Naive thymus-derived CD4-positive, alpha-beta T cell (primary cell): ENCODE measurements at regions of chr4 and their contacts with region 1.

Region 1: GRCh38 chr4:82268050-82268825 is 105.6 kb downstream of the HNRNPD start:
- DNase-seq: peak in 7 of 9 donors; percentile 25 to 60 (median 50)
- ATAC-seq: peak; percentile 97
- H3K4me3 ChIP-seq: no peak overlapping the region
- H3K4me3 Mint-ChIP-seq: peak overlapping the region in 8 of 10 donors; percentile 25 to 54 (median 36)
- H3K27ac ChIP-seq: no peak overlapping the region
- H3K27ac Mint-ChIP-seq: peak overlapping the region in 3 of 9 donors; percentile 25 to 79 (median 56)
- H3K4me1 ChIP-seq: peaks cover 0 to 8% of the 10 kb centered on the region in 2 donors
- H3K4me1 Mint-ChIP-seq: peaks cover 11 to 47% (median 28%) of the 10 kb centered on the region in 7 donors
- H3K27me3 ChIP-seq: no peaks in the 10 kb centered on the region
- H3K27me3 Mint-ChIP-seq: peaks cover 0 to 16% (median 0%) of the 10 kb centered on the region in 5 donors

Region 2: DNA sequence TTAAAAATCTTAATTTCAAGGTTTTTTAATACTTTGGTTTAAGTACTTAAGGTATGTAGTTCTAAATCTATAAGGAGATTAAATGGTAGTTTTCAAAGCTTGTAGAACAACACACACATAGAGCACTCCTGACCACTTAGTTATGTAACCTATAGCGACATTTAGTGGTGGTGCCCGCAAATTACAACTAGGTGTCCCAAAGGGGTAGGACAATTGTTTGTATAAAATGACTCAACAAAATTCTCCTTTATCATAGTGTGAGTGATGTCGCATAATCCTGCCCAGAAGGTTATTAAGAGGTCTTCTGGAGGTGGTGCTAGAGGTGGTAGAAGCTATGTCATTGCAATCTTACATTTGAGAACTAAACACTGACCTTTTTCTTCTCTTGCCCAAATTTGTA is 423.5 kb before region 1 on chr4:
- CTCF ChIA-PET with region 1: interaction called, 5 read pairs
- POLR2A ChIA-PET with region 1: no interaction called
- intact Hi-C with region 1: loop called (anchors 1 to 5 kb)
- DNase-seq: peak; percentile 9 to 75 (median 62)
- ATAC-seq: peak; percentile 96
- H3K4me3 ChIP-seq: no peak overlapping the region
- H3K4me3 Mint-ChIP-seq: no peak overlapping the region
- H3K27ac ChIP-seq: no peak overlapping the region
- H3K27ac Mint-ChIP-seq: no peak overlapping the region
- H3K4me1 ChIP-seq: no peaks in the 10 kb centered on the region
- H3K4me1 Mint-ChIP-seq: no peaks in the 10 kb centered on the region
- H3K27me3 ChIP-seq: no peaks in the 10 kb centered on the region
- H3K27me3 Mint-ChIP-seq: peaks cover 0 to 3% (median 0%) of the 10 kb centered on the region in 5 donors

Region 3: DNA sequence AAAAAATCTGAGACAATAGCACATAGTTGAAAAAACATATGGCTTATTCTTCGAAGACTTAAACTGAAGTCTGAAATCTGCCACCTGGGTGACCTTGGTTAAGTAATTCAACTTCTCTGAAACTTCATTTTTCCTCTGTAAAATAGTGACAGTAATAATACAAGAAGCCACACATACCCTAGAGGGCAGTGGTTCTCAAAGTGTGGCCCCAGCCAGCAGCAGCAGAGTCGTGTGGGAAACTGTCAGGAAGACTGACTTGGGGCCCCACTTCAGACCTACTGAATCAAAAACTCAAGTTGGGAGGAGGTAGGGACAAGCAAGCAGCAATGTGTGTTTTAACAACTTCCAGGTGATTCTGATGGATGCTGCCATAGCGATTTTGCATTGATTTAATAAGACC is 144.3 kb before region 1 on chr4:
- CTCF ChIA-PET with region 1: interaction called, 30 read pairs
- POLR2A ChIA-PET with region 1: no interaction called
- intact Hi-C with region 1: loop called in 1 of 2 experiments (anchors 1 kb)
- DNase-seq: peak in 6 of 9 donors; percentile 22 to 49 (median 28)
- ATAC-seq: peak; percentile 47
- H3K4me3 ChIP-seq: no peak overlapping the region
- H3K4me3 Mint-ChIP-seq: peak overlapping the region in 3 of 10 donors; percentile 2 to 29 (median 5)
- H3K27ac ChIP-seq: no peak overlapping the region
- H3K27ac Mint-ChIP-seq: peak overlapping the region in 2 of 9 donors; percentile 40 to 80
- H3K4me1 ChIP-seq: no peaks in the 10 kb centered on the region
- H3K4me1 Mint-ChIP-seq: peaks cover 0 to 17% (median 5%) of the 10 kb centered on the region in 7 donors
- H3K27me3 ChIP-seq: no peaks in the 10 kb centered on the region
- H3K27me3 Mint-ChIP-seq: peaks cover 0 to 3% (median 0%) of the 10 kb centered on the region in 5 donors

Region 4: GRCh38 chr4:82217986-82218715 is 50.1 kb before region 1 on chr4:
- CTCF ChIA-PET with region 1: interaction called, 4 read pairs
- POLR2A ChIA-PET with region 1: no interaction called
- intact Hi-C with region 1: loop called in 1 of 2 experiments (anchors 2 kb)
- DNase-seq: peak in 7 of 9 donors; percentile 2 to 36 (median 14)
- ATAC-seq: peak; percentile 50
- H3K4me3 ChIP-seq: no peak overlapping the region
- H3K4me3 Mint-ChIP-seq: no peak overlapping the region
- H3K27ac ChIP-seq: no peak overlapping the region
- H3K27ac Mint-ChIP-seq: no peak overlapping the region
- H3K4me1 ChIP-seq: peaks cover 10 to 12% of the 10 kb centered on the region in 2 donors
- H3K4me1 Mint-ChIP-seq: peaks cover 9 to 53% (median 38%) of the 10 kb centered on the region in 7 donors
- H3K27me3 ChIP-seq: no peaks in the 10 kb centered on the region
- H3K27me3 Mint-ChIP-seq: peaks cover 0 to 14% (median 0%) of the 10 kb centered on the region in 5 donors

Region 5: DNA sequence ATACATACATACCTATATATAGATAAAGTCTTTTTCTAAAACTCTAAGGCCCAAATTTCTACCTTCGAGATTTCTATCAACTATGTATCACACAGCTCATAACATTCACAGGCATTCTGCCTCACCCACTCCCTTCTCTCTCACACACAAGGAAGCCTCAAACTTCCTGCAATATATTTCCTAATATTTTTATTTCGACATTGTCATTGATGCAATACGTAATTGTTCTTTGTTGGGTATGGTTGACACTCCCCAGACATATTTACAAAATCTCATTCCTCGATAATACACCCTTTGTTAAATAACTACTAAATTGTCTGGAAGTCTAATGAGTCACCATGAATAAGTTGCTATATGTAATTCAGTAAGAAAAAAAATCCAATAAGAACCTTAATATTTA is 37.9 kb before region 1 on chr4:
- CTCF ChIA-PET with region 1: no interaction called
- POLR2A ChIA-PET with region 1: no interaction called
- intact Hi-C with region 1: no loop called
- DNase-seq: no peak
- ATAC-seq: peak; percentile 53
- H3K4me3 ChIP-seq: no peak overlapping the region
- H3K4me3 Mint-ChIP-seq: no peak overlapping the region
- H3K27ac ChIP-seq: no peak overlapping the region
- H3K27ac Mint-ChIP-seq: no peak overlapping the region
- H3K4me1 ChIP-seq: no peaks in the 10 kb centered on the region
- H3K4me1 Mint-ChIP-seq: peaks cover 0 to 3% (median 0%) of the 10 kb centered on the region in 7 donors
- H3K27me3 ChIP-seq: no peaks in the 10 kb centered on the region
- H3K27me3 Mint-ChIP-seq: peaks cover 0 to 19% (median 4%) of the 10 kb centered on the region in 5 donors

Region 6: GRCh38 chr4:82360298-82361177 is 92.3 kb after region 1 on chr4:
- CTCF ChIA-PET with region 1: interaction called, 3 read pairs
- POLR2A ChIA-PET with region 1: no interaction called
- intact Hi-C with region 1: loop called in 1 of 2 experiments (anchors 2 kb)
- DNase-seq: peak in 6 of 9 donors; percentile 17 to 33 (median 31)
- ATAC-seq: peak; percentile 70
- H3K4me3 ChIP-seq: no peak overlapping the region
- H3K4me3 Mint-ChIP-seq: peak overlapping the region in 7 of 10 donors; percentile 0 to 56 (median 36)
- H3K27ac ChIP-seq: peak overlapping the region; percentile 18
- H3K27ac Mint-ChIP-seq: peak overlapping the region in 8 of 9 donors; percentile 34 to 85 (median 54)
- H3K4me1 ChIP-seq: peaks cover 62 to 74% of the 10 kb centered on the region in 2 donors
- H3K4me1 Mint-ChIP-seq: peaks cover 64 to 98% (median 89%) of the 10 kb centered on the region in 7 donors
- H3K27me3 ChIP-seq: no peaks in the 10 kb centered on the region
- H3K27me3 Mint-ChIP-seq: no peaks in the 10 kb centered on the region

Region 7: GRCh38 chr4:82437285-82438005 is 169.2 kb after region 1 on chr4:
- CTCF ChIA-PET with region 1: no interaction called
- POLR2A ChIA-PET with region 1: no interaction called
- intact Hi-C with region 1: no loop called
- DNase-seq: no peak
- ATAC-seq: no peak
- H3K4me3 ChIP-seq: no peak overlapping the region
- H3K4me3 Mint-ChIP-seq: peak overlapping the region in 1 of 10 donors; percentile 19
- H3K27ac ChIP-seq: no peak overlapping the region
- H3K27ac Mint-ChIP-seq: peak overlapping the region in 2 of 9 donors; percentile 43 to 47
- H3K4me1 ChIP-seq: peaks cover 8 to 11% of the 10 kb centered on the region in 2 donors
- H3K4me1 Mint-ChIP-seq: peaks cover 33 to 86% (median 78%) of the 10 kb centered on the region in 7 donors
- H3K27me3 ChIP-seq: no peaks in the 10 kb centered on the region
- H3K27me3 Mint-ChIP-seq: no peaks in the 10 kb centered on the region